ENCODE measurements at regions of chr2 and their contacts with region 1.

Region 1: DNA sequence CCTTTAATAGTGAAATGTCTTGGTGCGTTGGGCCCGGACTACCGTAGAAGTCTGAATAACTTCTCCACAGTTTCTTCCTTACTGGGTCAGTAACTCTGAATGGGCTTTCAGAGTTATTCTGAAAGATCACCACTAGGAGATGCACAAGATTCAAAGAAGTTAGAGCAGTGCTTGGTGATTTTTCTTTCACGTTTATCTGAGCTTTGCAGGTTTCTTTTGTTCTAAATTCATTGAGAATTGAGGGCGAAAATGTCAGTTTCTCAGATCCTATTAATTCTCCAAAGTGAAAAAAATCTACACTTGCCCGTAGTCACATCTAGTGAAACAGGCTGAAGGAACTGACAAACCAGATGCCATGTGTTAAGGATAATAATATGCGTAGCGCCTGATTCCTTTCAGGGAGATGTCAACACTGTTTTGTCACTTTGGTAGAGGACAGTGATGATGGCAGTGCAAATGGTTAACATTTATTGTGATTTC is 70.1 kb downstream of the QPCT start:
- DNase-seq: peak; percentile 72
- H3K4me3 ChIP-seq: no peak overlapping the region; a peak in 1 of 4 replicates
- H3K27ac ChIP-seq: peak overlapping the region; percentile 42 to 87; a peak in 3 of 4 replicates
- H3K4me1 ChIP-seq: peaks cover 10 to 16% of the 10 kb centered on the region in 2 experiments
- H3K27me3 ChIP-seq: no peaks in the 10 kb centered on the region
- CTCF ChIP-seq: peak; percentile 99
- EP300 ChIP-seq: 0 out of 4 replicates have a peak, but pooled peaks of 1 of the 2 experiments have one; percentile 36
- RAD21 ChIP-seq: peak; percentile 100

Region 2: DNA sequence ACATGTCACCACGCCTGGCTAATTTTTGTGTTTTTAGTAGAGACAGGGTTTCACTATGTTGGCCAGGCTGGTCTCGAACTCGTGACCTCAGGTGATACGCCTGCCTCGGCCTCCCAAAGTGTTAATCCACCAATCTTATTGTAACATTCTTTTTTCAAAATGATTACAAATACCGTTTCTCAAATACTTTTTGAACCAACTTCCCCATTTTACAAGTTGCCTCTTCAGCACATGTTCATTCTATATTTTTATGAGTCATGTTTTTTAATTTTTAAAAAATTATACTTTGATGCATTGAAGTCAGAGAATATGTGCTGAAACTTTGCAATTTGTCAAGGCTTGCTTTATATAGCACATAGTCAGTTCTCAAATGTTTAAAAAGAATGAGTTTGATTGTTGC is 11.9 kb before region 1 on chr2:
- CTCF ChIA-PET with region 1: interaction called, 174 read pairs
- POLR2A ChIA-PET with region 1: no interaction called
- DNase-seq: no peak
- H3K4me3 ChIP-seq: no peak overlapping the region
- H3K27ac ChIP-seq: no peak overlapping the region
- H3K4me1 ChIP-seq: no peaks in the 10 kb centered on the region
- H3K27me3 ChIP-seq: no peaks in the 10 kb centered on the region
- CTCF ChIP-seq: no peak
- EP300 ChIP-seq: no peak
- RAD21 ChIP-seq: no peak

Region 3: GRCh38 chr2:37537316-37537715 is 122.8 kb after region 1 on chr2:
- CTCF ChIA-PET with region 1: interaction called, 13 read pairs
- POLR2A ChIA-PET with region 1: no interaction called
- DNase-seq: no peak
- H3K4me3 ChIP-seq: no peak overlapping the region
- H3K27ac ChIP-seq: no peak overlapping the region
- H3K4me1 ChIP-seq: peaks cover 0 to 16% of the 10 kb centered on the region in 2 experiments; a peak in 2 of 4 replicates
- H3K27me3 ChIP-seq: no peaks in the 10 kb centered on the region
- CTCF ChIP-seq: no peak
- EP300 ChIP-seq: no peak
- RAD21 ChIP-seq: no peak

Region 4: GRCh38 chr2:37648331-37649011 is 234.0 kb after region 1 on chr2:
- CTCF ChIA-PET with region 1: interaction called, 17 read pairs
- POLR2A ChIA-PET with region 1: no interaction called
- DNase-seq: no peak
- H3K4me3 ChIP-seq: no peak overlapping the region; a peak in 1 of 4 replicates
- H3K27ac ChIP-seq: peak overlapping the region; percentile 11 to 68; a peak in 3 of 4 replicates
- H3K4me1 ChIP-seq: peaks cover 47 to 50% of the 10 kb centered on the region in 2 experiments
- H3K27me3 ChIP-seq: no peaks in the 10 kb centered on the region
- CTCF ChIP-seq: peak; percentile 10; the same call in 1 of the 2 replicates
- EP300 ChIP-seq: peak in 1 of 2 experiments; percentile 29; a peak in 1 of 4 replicates
- RAD21 ChIP-seq: no peak

Region 5: DNA sequence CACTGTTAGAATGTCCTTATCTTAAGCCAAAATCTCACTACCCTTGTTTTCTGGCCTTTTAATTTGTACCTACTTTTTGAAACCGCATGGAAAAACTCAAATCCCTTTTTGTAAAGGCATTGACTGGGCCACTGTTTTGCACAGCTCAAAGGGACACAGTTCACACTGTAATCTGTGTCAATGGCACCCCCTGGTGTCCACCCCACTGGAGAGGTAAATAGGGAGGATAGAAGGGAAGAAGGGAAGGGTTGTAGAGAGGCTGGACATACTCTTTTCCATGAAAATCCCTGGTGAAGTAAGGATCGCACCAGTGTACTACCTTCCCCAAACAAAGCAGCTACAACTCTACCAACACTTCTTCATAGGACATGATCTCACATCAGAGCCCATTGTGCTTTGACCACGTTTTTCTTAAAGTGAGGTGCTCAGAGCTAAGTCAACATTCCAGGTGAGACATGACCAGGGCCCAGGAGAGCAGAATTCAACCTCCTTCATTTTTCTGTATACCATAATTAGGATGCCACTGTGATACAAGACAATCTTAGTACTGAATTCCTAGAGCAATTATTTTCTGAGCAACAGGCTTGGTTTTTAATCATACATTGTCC is 418.2 kb after region 1 on chr2:
- CTCF ChIA-PET with region 1: interaction called, 206 read pairs
- POLR2A ChIA-PET with region 1: interaction called, 13 read pairs
- DNase-seq: peak; percentile 81
- H3K4me3 ChIP-seq: no peak overlapping the region
- H3K27ac ChIP-seq: peak overlapping the region in 1 of 2 experiments; percentile 53; a peak in 2 of 4 replicates
- H3K4me1 ChIP-seq: peaks cover 14 to 21% of the 10 kb centered on the region in 2 experiments
- H3K27me3 ChIP-seq: no peaks in the 10 kb centered on the region
- CTCF ChIP-seq: peak; percentile 97
- EP300 ChIP-seq: peak in 1 of 2 experiments; percentile 18; a peak in 1 of 4 replicates
- RAD21 ChIP-seq: peak; percentile 99

Region 6: DNA sequence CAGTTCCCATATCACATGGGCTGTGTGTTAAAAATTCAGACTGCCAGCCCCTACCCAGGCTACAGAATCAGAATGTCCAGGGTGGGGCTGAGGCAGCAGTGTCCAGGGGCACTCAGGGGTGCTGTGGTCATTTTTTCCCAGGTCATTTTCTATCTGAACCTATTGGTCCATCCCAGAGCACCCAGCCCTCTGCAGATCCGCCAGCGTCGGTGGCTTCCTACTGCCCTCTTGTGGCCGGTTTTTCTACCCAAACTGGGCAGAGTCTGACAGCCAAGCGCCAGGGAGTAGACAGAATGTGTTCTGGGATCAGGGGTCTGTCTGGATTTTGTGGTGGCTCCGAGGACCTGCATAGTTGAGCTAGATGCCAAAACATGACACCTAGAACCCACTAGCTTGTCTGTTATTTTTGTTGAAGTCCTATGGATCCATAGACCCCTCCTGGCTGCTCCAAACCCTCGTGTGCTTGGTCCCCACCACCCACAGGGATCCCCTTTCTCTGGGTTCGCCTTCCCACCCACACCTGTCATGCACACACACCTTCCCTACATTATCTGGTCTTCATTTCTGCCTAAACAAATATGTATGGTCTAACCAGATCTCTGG is 476.5 kb after region 1 on chr2:
- CTCF ChIA-PET with region 1: interaction called, 540 read pairs
- POLR2A ChIA-PET with region 1: no interaction called
- DNase-seq: peak; percentile 85
- H3K4me3 ChIP-seq: no peak overlapping the region
- H3K27ac ChIP-seq: no peak overlapping the region; a peak in 1 of 4 replicates
- H3K4me1 ChIP-seq: peaks cover 6 to 8% of the 10 kb centered on the region in 2 experiments; a peak in 3 of 4 replicates
- H3K27me3 ChIP-seq: no peaks in the 10 kb centered on the region
- CTCF ChIP-seq: peak; percentile 95
- EP300 ChIP-seq: no peak
- RAD21 ChIP-seq: peak; percentile 95